ENCODE measurements at regions of chr2 and their contacts with region 1.

Region 1: GRCh38 chr2:38572167-38572566 is 30.6 kb downstream of the HNRNPLL start:
- DNase-seq: no peak
- H3K4me3 ChIP-seq: no peak overlapping the region
- H3K27ac ChIP-seq: no peak overlapping the region
- H3K4me1 ChIP-seq: no peaks in the 10 kb centered on the region
- H3K27me3 ChIP-seq: no peaks in the 10 kb centered on the region
- CTCF ChIP-seq: no peak
- EP300 ChIP-seq: no peak
- POLR2A ChIP-seq: no peak
- RAD21 ChIP-seq: no peak

Region 2: DNA sequence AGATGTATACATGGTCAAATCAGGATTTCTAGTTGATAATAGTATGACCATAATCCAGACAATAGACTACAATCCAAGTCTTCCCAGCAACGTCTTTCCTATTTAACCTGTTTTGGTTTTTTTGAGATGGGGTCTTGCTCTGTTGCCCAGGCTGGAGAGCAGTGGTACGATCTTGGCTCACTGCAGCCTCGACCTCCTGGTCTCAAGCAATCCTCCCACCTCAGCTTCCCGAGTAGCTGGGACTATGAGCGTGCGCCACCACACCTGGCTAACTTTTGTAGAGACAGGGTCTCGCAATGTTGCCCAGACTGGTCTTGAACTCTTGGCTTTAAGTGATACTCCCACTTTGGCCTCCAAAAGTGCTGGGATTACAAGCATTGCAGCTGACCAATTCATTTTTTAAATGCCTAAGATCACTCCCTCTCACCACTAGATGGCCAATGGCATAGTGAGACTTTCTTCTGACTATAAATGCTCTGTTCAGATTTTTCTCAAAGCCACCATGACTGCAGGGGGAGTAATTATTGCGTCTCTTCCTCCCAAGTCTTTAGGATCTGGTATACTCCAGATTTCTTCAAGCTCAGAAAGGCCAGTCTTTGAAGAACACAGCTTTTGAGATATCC is 17.1 kb before region 1 on chr2:
- CTCF ChIA-PET with region 1: interaction called, 27 read pairs
- POLR2A ChIA-PET with region 1: interaction called, 4 read pairs
- DNase-seq: no peak
- H3K4me3 ChIP-seq: no peak overlapping the region
- H3K27ac ChIP-seq: no peak overlapping the region
- H3K4me1 ChIP-seq: no peaks in the 10 kb centered on the region
- H3K27me3 ChIP-seq: no peaks in the 10 kb centered on the region
- CTCF ChIP-seq: peak in 2 of 3 experiments; percentile 43 to 66; a peak in 2 of 4 replicates
- EP300 ChIP-seq: no peak
- POLR2A ChIP-seq: no peak
- RAD21 ChIP-seq: peak; percentile 35; a peak in 2 of 4 replicates

Measured in H1 (cell line).